CD8-positive, alpha-beta T cell (primary cell): ENCODE measurements at regions of chr11 and their contacts with region 1.

Region 1: GRCh38 chr11:44911029-44911814 is 39.5 kb downstream of the TP53I11 start:
- DNase-seq: peak; percentile 62 to 90 (median 82)
- ATAC-seq: peak; percentile 64
- H3K4me3 ChIP-seq: no peak overlapping the region
- H3K4me3 Mint-ChIP-seq: no peak overlapping the region
- H3K27ac ChIP-seq: no peak overlapping the region
- H3K27ac Mint-ChIP-seq: no peak overlapping the region
- H3K4me1 ChIP-seq: no peaks in the 10 kb centered on the region
- H3K4me1 Mint-ChIP-seq: peaks cover 3% of the 10 kb centered on the region
- H3K27me3 ChIP-seq: no peaks in the 10 kb centered on the region
- H3K27me3 Mint-ChIP-seq: no peaks in the 10 kb centered on the region
- CTCF ChIP-seq: peak; percentile 61

Region 2: DNA sequence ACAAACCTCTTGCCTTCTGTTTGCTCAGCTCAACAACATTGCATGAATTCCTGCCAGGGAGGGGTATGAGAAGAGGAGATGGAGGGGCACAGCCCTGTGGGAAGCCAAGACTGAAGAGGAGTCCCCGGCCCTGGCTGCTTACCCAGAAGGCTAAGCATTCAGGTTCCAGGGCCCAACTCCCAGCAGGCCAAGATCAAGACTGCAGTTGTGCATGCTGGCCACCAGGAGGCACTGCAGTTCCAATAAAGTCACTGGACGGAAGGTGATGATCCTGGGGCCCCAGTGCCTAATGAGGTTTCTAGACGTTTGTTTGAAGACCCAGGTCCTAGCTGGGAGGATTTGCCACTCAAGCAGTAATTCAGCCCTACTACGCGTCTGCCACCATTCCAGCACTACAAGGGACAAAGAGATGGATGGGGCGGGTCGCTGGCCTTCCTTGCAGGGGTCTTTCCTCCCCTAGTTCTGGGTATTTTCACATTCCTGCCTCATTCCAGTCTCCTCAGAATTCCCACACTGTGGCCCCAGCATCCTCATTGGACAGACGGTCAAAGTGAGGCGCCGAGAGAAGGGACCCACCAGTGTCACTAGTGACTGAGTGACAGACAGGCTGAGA is 624.8 kb before region 1 on chr11:
- CTCF ChIA-PET with region 1: interaction called, 4 read pairs
- POLR2A ChIA-PET with region 1: no interaction called
- intact Hi-C with region 1: loop called (anchors 5 to 10 kb)
- DNase-seq: peak; percentile 8 to 65 (median 52)
- ATAC-seq: peak; percentile 52
- H3K4me3 ChIP-seq: no peak overlapping the region
- H3K4me3 Mint-ChIP-seq: no peak overlapping the region
- H3K27ac ChIP-seq: no peak overlapping the region
- H3K27ac Mint-ChIP-seq: no peak overlapping the region
- H3K4me1 ChIP-seq: no peaks in the 10 kb centered on the region
- H3K4me1 Mint-ChIP-seq: no peaks in the 10 kb centered on the region
- H3K27me3 ChIP-seq: no peaks in the 10 kb centered on the region
- H3K27me3 Mint-ChIP-seq: no peaks in the 10 kb centered on the region
- CTCF ChIP-seq: peak; percentile 93

Region 3: DNA sequence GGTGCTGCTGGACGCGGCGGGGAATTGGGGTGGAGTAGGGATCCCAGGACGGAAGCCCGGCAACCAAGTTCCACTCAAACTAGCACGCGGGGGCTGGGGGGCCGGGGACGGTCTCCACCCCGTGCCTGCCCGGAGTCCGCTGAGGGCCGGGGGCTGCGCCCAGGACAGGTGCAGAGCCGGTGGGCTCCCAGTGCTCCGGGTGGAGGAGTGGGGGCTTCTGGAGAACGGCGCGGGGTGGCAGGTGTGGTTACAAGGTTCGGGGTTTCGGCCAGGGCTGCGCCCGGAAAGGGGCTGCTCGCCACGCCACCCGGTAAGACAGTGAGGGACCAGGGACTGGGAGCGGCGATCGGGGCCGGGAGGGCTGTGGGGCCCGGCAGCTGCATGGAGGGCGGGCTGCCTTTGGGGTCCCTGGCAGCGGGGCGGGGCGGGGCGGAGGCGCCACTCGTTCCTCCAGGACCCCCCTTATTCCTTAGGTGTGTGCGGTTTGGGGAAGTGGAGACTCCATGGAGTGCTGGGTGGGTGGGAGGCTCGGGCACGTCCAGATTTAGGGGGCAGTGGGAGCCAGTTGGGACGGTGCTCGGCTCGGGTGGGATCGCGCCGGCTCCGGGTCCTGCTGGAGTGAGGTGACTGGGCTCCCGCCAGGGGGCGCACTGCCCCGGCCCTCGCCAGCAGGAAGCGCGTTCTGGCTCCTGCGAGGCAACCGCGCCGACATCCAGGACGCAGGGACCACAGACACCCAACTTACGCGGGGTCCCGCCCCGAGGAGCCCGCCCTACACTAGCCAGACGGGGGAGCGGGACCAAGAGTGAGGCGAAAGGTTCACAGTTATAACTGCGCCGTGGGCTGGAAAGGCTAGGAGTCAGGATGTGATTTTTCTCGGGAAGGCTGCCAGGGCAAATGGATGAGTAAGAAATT is 183.6 kb before region 1 on chr11:
- CTCF ChIA-PET with region 1: interaction called, 8 read pairs
- POLR2A ChIA-PET with region 1: no interaction called
- intact Hi-C with region 1: loop called (anchors 1 kb)
- DNase-seq: peak; percentile 55 to 87 (median 74)
- ATAC-seq: peak; percentile 71
- H3K4me3 ChIP-seq: peak overlapping the region; percentile 63 to 70
- H3K4me3 Mint-ChIP-seq: peak overlapping the region; percentile 84
- H3K27ac ChIP-seq: no peak overlapping the region
- H3K27ac Mint-ChIP-seq: peak overlapping the region; percentile 27
- H3K4me1 ChIP-seq: peaks cover 18% of the 10 kb centered on the region
- H3K4me1 Mint-ChIP-seq: peaks cover 30% of the 10 kb centered on the region
- H3K27me3 ChIP-seq: peaks cover 3 to 6% of the 10 kb centered on the region in 2 experiments
- H3K27me3 Mint-ChIP-seq: peaks cover 7% of the 10 kb centered on the region
- CTCF ChIP-seq: peak; percentile 90

Region 4: DNA sequence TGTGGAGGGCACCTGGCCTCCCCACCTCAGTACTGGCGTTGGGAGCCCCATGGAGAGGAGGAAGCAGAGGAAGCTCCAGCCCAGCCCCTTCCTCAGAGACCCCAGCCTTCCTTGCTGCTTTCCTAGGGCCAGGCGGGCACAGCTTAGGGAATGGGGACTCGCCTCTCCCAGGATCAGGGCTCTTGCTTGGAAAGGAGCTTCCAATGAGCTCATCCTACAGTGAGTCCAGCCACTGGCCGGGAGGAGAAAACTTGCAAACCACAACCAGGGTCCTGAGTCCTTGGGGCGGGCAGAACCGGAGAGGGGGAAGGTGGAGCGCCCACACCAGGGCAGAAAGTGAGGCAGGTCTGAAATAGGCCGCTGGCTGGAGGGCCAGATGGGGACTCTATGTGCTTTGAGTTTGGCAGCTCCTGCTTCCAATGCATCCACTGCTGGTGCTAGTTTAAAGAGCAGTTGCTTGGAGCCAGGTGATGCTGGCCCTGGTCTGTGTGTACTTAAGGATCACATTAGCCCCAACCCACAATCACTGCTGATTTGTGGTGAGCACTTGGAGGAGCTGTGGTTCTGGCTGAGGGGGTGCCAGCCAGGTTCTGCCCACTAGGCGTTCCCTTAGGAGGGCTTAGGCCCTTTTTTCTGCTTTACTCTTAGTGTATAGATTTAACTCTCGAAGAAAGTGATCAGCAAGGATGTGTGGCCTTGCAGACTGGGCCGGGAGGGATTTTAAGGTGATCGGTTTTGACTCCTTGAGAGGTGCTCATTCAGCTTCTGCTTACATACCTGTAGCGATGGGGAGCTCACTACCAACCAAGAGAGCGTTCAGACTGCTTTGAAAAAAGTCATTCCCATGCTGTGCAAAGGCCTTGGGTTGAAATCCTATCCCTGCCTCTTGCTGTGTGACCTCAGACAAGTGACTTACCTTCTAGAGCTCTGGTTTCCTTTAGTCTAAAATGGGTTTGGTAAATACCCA is 42.5 kb before region 1 on chr11:
- CTCF ChIA-PET with region 1: interaction called, 10 read pairs
- POLR2A ChIA-PET with region 1: no interaction called
- intact Hi-C with region 1: no loop called
- DNase-seq: no peak
- ATAC-seq: no peak
- H3K4me3 ChIP-seq: no peak overlapping the region
- H3K4me3 Mint-ChIP-seq: no peak overlapping the region
- H3K27ac ChIP-seq: no peak overlapping the region
- H3K27ac Mint-ChIP-seq: no peak overlapping the region
- H3K4me1 ChIP-seq: no peaks in the 10 kb centered on the region
- H3K4me1 Mint-ChIP-seq: peaks cover 1% of the 10 kb centered on the region
- H3K27me3 ChIP-seq: no peaks in the 10 kb centered on the region
- H3K27me3 Mint-ChIP-seq: no peaks in the 10 kb centered on the region
- CTCF ChIP-seq: no peak

Region 5: GRCh38 chr11:44901120-44901633 is 10.0 kb before region 1 on chr11:
- CTCF ChIA-PET with region 1: interaction called, 17 read pairs
- POLR2A ChIA-PET with region 1: no interaction called
- intact Hi-C with region 1: no loop called
- DNase-seq: no peak
- ATAC-seq: no peak
- H3K4me3 ChIP-seq: no peak overlapping the region
- H3K4me3 Mint-ChIP-seq: no peak overlapping the region
- H3K27ac ChIP-seq: no peak overlapping the region
- H3K27ac Mint-ChIP-seq: no peak overlapping the region
- H3K4me1 ChIP-seq: no peaks in the 10 kb centered on the region
- H3K4me1 Mint-ChIP-seq: no peaks in the 10 kb centered on the region
- H3K27me3 ChIP-seq: no peaks in the 10 kb centered on the region
- H3K27me3 Mint-ChIP-seq: no peaks in the 10 kb centered on the region
- CTCF ChIP-seq: no peak

Region 6: DNA sequence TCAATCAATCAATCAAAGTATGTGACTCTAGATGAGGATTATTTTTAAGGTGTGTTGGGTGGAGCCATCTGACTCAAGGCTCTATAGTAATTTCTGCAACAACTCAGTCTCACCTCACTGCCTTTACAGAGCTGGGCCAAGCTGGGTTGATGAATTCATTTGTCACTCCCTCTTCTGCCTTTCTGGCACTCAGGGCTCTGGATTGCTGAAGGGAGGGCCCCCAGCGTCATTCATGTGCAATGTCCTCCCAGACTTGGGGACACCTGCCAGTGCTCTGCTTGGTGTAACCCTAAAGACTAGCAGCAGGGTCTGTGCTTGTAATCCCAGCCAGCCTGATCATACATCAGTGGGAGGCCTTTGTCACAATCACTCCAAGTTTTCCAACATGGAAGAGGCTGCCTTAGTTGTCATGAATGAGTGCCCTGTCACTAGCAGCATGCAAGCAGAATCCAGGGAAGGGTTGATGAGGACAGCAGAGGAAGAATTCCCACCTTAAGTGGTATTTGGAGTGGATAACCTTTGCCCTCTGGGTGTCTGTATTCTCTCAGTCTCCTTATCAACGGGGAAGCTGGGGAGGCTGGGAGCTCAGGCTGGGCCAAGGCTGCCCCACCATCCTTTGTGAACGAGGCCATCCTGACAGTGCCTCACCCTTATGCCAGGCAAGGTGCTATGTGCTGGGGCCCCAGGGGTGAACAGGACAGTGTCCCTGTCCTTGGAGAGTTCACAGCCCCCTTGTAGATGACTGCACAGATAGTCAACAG is 41.5 kb after region 1 on chr11:
- CTCF ChIA-PET with region 1: no interaction called
- POLR2A ChIA-PET with region 1: no interaction called
- intact Hi-C with region 1: no loop called
- DNase-seq: no peak
- ATAC-seq: no peak
- H3K4me3 ChIP-seq: no peak overlapping the region
- H3K4me3 Mint-ChIP-seq: no peak overlapping the region
- H3K27ac ChIP-seq: no peak overlapping the region
- H3K27ac Mint-ChIP-seq: no peak overlapping the region
- H3K4me1 ChIP-seq: no peaks in the 10 kb centered on the region
- H3K4me1 Mint-ChIP-seq: peaks cover 7% of the 10 kb centered on the region
- H3K27me3 ChIP-seq: no peaks in the 10 kb centered on the region
- H3K27me3 Mint-ChIP-seq: no peaks in the 10 kb centered on the region
- CTCF ChIP-seq: no peak